CD14-positive monocyte (primary cell): ENCODE measurements at regions of chr10 and their contacts with region 1.

Region 1: GRCh38 chr10:6300106-6300783 is 97.5 kb downstream of the PFKFB3 start:
- DNase-seq: peak; percentile 86 to 89 (median 87)
- H3K4me3 ChIP-seq: peak overlapping the region in 1 of 3 experiments; percentile 41
- H3K4me3 Mint-ChIP-seq: peak overlapping the region in 1 of 2 donors; percentile 57
- H3K27ac ChIP-seq: peak overlapping the region; percentile 78 to 87
- H3K27ac Mint-ChIP-seq: peak overlapping the region; percentile 82 to 93 (median 90)
- H3K4me1 ChIP-seq: peaks cover 58 to 64% of the 10 kb centered on the region in 2 donors
- H3K4me1 Mint-ChIP-seq: peaks cover 61% of the 10 kb centered on the region
- H3K27me3 ChIP-seq: no peaks in the 10 kb centered on the region
- H3K27me3 Mint-ChIP-seq: peaks cover 2 to 14% (median 3%) of the 10 kb centered on the region in 3 donors
- CTCF ChIP-seq: no peak

Region 2: GRCh38 chr10:6247041-6247712 is 53.1 kb before region 1 on chr10:
- intact Hi-C with region 1: loop called in 1 of 2 experiments (anchors 10 kb)
- DNase-seq: no peak
- H3K4me3 ChIP-seq: no peak overlapping the region
- H3K4me3 Mint-ChIP-seq: no peak overlapping the region
- H3K27ac ChIP-seq: no peak overlapping the region
- H3K27ac Mint-ChIP-seq: peak overlapping the region in 1 of 7 donors; percentile 46
- H3K4me1 ChIP-seq: peaks cover 13 to 24% of the 10 kb centered on the region in 2 donors
- H3K4me1 Mint-ChIP-seq: peaks cover 21% of the 10 kb centered on the region
- H3K27me3 ChIP-seq: no peaks in the 10 kb centered on the region
- H3K27me3 Mint-ChIP-seq: peaks cover 0 to 6% (median 0%) of the 10 kb centered on the region in 3 donors
- CTCF ChIP-seq: no peak

Region 3: DNA sequence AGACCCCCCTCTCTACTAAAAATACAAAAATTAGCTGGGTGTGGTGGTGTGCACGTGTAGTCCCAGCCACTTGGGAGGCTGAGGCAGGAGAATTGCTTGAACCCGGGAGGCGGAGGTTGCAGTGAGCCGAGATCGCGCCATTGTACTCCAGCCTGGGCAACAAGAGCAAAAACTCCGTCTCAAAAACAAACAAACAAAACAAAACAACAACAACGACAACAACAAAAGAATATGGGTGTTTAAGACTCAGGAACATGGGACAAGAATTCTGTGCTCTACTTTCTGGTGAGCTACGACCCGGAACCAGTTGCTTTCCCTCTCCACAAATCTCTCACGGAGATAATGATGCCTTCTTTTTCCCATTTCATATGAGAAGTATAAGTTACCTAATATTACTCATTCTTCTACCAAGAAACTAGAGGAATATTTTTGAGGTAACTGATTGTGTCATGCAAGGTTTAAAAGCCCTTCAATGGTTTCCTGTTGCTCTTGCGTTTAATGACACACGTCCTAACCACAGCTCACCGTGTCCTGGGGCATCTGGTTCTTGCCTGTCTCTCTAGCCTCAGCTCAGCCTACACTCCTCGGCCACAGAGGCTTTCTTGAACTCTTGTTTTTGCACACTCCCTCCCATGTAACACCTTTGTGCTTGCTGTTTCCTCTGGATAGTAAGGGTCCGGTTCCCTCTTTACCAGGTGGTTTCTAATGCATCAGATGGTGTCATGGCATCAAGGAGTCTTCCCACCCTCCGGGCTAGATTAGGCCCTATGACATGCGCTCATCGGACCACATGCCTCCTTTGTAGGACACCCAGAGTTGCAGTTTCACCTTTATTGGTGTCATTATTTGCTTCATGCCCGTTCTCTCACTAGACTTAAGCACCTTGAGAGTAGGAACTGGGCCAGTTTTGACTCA is 30.0 kb before region 1 on chr10:
- intact Hi-C with region 1: loop called in 1 of 2 experiments (anchors 5 kb)
- DNase-seq: peak; percentile 60 to 86 (median 82)
- H3K4me3 ChIP-seq: no peak overlapping the region
- H3K4me3 Mint-ChIP-seq: no peak overlapping the region
- H3K27ac ChIP-seq: peak overlapping the region in 1 of 2 donors; percentile 57
- H3K27ac Mint-ChIP-seq: peak overlapping the region in 6 of 7 donors; percentile 77 to 100 (median 88)
- H3K4me1 ChIP-seq: peaks cover 51 to 54% of the 10 kb centered on the region in 2 donors
- H3K4me1 Mint-ChIP-seq: peaks cover 60% of the 10 kb centered on the region
- H3K27me3 ChIP-seq: no peaks in the 10 kb centered on the region
- H3K27me3 Mint-ChIP-seq: peaks cover 0 to 10% (median 7%) of the 10 kb centered on the region in 3 donors
- CTCF ChIP-seq: no peak

Region 4: GRCh38 chr10:6275022-6275997 is 24.9 kb before region 1 on chr10:
- intact Hi-C with region 1: loop called in 1 of 2 experiments (anchors 2 kb)
- DNase-seq: peak; percentile 100
- H3K4me3 ChIP-seq: peak overlapping the region in 2 of 3 experiments; percentile 15 to 24
- H3K4me3 Mint-ChIP-seq: peak overlapping the region; percentile 67 to 83
- H3K27ac ChIP-seq: peak overlapping the region; percentile 96 to 98
- H3K27ac Mint-ChIP-seq: peak overlapping the region; percentile 97 to 100 (median 99)
- H3K4me1 ChIP-seq: peaks cover 27 to 33% of the 10 kb centered on the region in 2 donors
- H3K4me1 Mint-ChIP-seq: peaks cover 49% of the 10 kb centered on the region
- H3K27me3 ChIP-seq: no peaks in the 10 kb centered on the region
- H3K27me3 Mint-ChIP-seq: peaks cover 1 to 17% (median 4%) of the 10 kb centered on the region in 3 donors
- CTCF ChIP-seq: no peak

Region 5: DNA sequence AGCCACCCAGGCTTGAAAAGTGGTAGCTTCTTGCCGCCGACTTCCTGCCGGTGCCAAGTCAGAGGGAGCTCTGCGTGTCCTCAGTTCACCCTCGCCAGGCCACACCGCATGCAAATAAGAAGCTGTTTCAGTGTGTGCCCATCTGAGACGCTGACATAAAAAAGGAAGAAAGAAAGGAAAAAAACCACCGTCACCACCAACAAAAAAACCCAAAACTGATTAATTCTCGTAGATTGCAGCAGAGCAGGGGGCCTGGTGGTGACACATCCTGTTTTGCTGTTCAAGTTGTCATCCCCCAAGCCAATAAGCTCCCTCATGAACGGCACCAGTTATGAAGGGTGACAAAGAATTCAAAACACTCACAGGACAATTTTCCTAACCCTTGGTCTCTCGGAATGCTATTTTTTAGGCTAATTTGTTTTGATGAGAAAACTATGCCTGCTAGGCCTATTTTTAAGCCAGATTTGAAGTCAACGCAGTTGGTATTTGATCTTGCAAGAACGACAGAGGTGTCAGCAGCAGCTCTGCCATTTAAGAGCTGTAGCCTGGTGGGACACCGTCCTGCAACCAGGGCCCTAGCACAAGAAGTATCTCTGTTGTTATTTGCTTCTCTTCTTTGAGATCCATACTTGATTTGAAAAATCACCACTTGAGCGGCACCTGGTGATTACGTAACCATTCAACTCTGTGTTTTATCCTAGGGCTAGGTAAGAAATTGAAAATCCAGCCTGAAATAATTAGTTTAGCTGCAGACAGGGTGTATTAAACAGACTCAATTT is 48.0 kb after region 1 on chr10:
- intact Hi-C with region 1: loop called (anchors 2 to 10 kb)
- DNase-seq: peak; percentile 93 to 98 (median 94)
- H3K4me3 ChIP-seq: peak overlapping the region in 1 of 3 experiments; percentile 38
- H3K4me3 Mint-ChIP-seq: peak overlapping the region; percentile 61 to 84
- H3K27ac ChIP-seq: peak overlapping the region; percentile 51 to 83
- H3K27ac Mint-ChIP-seq: peak overlapping the region; percentile 91 to 95 (median 93)
- H3K4me1 ChIP-seq: peaks cover 26 to 31% of the 10 kb centered on the region in 2 donors
- H3K4me1 Mint-ChIP-seq: peaks cover 41% of the 10 kb centered on the region
- H3K27me3 ChIP-seq: no peaks in the 10 kb centered on the region
- H3K27me3 Mint-ChIP-seq: peaks cover 0 to 7% (median 1%) of the 10 kb centered on the region in 3 donors
- CTCF ChIP-seq: no peak